CD4-positive, alpha-beta T cell (primary cell): ENCODE measurements at regions of chr7 and their contacts with region 1.

Region 1: GRCh38 chr7:6589829-6590644 is at the start of gene INTS15:
- DNase-seq: peak; percentile 65 to 95 (median 78)
- ATAC-seq: peak; percentile 89
- H3K4me3 ChIP-seq: peak within 1 kb of the TSS; percentile 73
- H3K4me3 Mint-ChIP-seq: peak within 1 kb of the TSS; percentile 98
- H3K27ac ChIP-seq: peak within 1 kb of the TSS; percentile 55 to 59
- H3K27ac Mint-ChIP-seq: peak within 1 kb of the TSS; percentile 96
- H3K4me1 ChIP-seq: peaks cover 28% of the 10 kb centered on the region
- H3K4me1 Mint-ChIP-seq: peaks cover 12% of the 10 kb centered on the region
- H3K27me3 ChIP-seq: no peaks in the 10 kb centered on the region
- H3K27me3 Mint-ChIP-seq: no peaks in the 10 kb centered on the region
- CTCF ChIP-seq: peak; percentile 45
- total RNA-seq, gene INTS15: 39.3 to 41.8 TPM

Region 2: GRCh38 chr7:6430271-6430940 is 159.6 kb before region 1 on chr7:
- CTCF ChIA-PET with region 1: no interaction called
- POLR2A ChIA-PET with region 1: no interaction called
- intact Hi-C with region 1: no loop called
- DNase-seq: peak in 1 of 14 experiments; percentile 27
- ATAC-seq: no peak
- H3K4me3 ChIP-seq: no peak overlapping the region
- H3K4me3 Mint-ChIP-seq: no peak overlapping the region
- H3K27ac ChIP-seq: no peak overlapping the region
- H3K27ac Mint-ChIP-seq: no peak overlapping the region
- H3K4me1 ChIP-seq: peaks cover 10% of the 10 kb centered on the region
- H3K4me1 Mint-ChIP-seq: peaks cover 2% of the 10 kb centered on the region
- H3K27me3 ChIP-seq: no peaks in the 10 kb centered on the region
- H3K27me3 Mint-ChIP-seq: no peaks in the 10 kb centered on the region
- CTCF ChIP-seq: no peak

Region 3: DNA sequence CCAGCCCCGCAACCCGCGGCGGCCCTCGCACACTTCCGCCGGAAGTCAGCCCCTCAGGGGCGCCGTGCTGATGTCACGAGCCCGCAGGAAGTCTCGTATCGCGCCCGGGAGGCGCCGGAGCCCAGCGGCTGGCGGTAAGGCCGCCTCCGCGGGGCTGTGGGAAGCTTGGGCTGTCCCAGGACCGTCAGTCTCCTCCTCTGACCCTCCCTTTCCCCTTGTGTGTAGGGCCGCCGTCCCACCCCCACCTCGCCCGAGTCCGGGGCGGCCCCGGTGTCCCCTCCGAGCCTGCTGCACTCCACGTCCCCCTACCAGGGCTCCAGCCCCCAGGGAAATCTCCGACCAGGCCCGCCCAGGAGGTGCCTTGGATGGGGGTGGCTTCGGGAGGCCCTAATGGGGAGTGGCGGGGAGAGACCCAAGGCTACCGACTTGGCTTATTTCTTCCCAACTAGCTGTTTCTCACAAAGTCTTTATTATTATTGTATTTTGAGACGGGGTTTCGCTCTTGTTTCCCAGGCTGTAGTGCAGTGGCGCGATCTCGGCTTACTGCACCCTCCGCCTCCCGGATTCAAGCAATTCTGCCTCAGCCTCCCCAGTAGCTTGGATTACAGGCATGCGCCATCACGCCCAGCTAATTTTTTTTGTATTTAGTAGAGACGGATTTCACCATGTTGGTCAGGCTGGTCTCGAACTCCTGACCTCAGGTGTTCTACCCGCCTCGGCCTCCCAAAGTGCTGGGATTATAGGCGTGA is 12.5 kb before region 1 on chr7 and contains the start of gene ZDHHC4:
- CTCF ChIA-PET with region 1: interaction called, 14 read pairs
- POLR2A ChIA-PET with region 1: interaction called, 21 read pairs
- intact Hi-C with region 1: loop called in 1 of 2 experiments (anchors 2 kb)
- DNase-seq: peak; percentile 65 to 94 (median 82)
- ATAC-seq: peak; percentile 92
- H3K4me3 ChIP-seq: peak within 1 kb of the TSS; percentile 83
- H3K4me3 Mint-ChIP-seq: peak within 1 kb of the TSS; percentile 93
- H3K27ac ChIP-seq: peak within 1 kb of the TSS; percentile 89 to 95
- H3K27ac Mint-ChIP-seq: peak within 1 kb of the TSS; percentile 88
- H3K4me1 ChIP-seq: peaks cover 17% of the 10 kb centered on the region
- H3K4me1 Mint-ChIP-seq: peaks cover 14% of the 10 kb centered on the region
- H3K27me3 ChIP-seq: no peaks in the 10 kb centered on the region
- H3K27me3 Mint-ChIP-seq: no peaks in the 10 kb centered on the region
- CTCF ChIP-seq: no peak
- total RNA-seq, gene ZDHHC4: 32.1 to 32.9 TPM

Region 4: GRCh38 chr7:6637544-6638229 is 47.6 kb after region 1 on chr7:
- CTCF ChIA-PET with region 1: no interaction called
- POLR2A ChIA-PET with region 1: interaction called, 3 read pairs
- intact Hi-C with region 1: loop called (anchors 2 to 5 kb)
- DNase-seq: peak; percentile 14 to 79 (median 41)
- ATAC-seq: peak; percentile 59
- H3K4me3 ChIP-seq: peak overlapping the region; percentile 61
- H3K4me3 Mint-ChIP-seq: peak overlapping the region; percentile 89
- H3K27ac ChIP-seq: peak overlapping the region; percentile 56 to 60
- H3K27ac Mint-ChIP-seq: peak overlapping the region; percentile 87
- H3K4me1 ChIP-seq: peaks cover 35% of the 10 kb centered on the region
- H3K4me1 Mint-ChIP-seq: peaks cover 34% of the 10 kb centered on the region
- H3K27me3 ChIP-seq: no peaks in the 10 kb centered on the region
- H3K27me3 Mint-ChIP-seq: no peaks in the 10 kb centered on the region
- CTCF ChIP-seq: peak; percentile 33